AG04449 (cell line): ENCODE measurements at regions of chr20 and their contacts with region 1.

Region 1: DNA sequence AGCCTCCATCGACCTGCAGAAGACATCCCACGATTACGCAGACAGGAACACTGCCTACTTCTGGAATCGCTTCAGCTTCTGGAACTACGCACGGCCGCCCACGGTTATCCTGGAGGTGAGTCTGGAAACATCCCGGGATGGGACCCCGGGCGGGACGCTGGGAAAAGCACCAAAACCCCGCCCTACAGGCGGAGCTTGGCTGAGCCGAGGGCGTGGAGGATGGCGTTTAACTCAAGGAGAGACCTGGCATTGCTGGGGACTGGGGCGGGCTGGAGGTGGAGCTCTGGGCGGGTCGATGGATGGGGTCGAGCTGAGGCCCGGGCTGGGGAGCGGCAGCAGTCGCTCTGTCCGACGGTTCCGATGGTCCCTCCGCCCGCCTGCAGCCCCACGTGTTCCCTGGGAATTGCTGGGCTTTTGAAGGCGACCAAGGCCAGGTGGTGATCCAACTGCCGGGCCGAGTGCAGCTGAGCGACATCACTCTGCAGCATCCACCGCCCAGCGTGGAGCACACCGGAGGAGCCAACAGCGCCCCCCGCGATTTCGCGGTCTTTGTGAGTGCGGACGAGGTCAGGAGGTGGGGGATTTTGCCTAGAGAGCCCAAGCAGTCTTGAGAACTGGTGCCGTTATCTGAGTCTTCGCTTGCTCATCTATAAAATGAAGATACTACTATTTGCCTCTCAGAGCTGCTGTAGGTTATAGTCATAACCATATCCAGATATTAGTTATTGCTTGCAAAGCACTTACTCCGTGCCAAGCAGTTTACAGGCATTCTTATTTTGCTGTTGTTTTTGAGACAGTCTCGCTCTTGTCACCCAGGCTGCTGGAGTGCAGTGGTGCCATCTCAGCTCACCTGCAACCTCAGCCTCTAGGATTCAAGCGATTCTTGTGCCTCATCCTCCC is 3.8 kb downstream of the SPAG4 start:
- DNase-seq: peak; percentile 10
- H3K4me3 ChIP-seq: peak overlapping the region; percentile 70
- CTCF ChIP-seq: peak; percentile 62

Region 2: DNA sequence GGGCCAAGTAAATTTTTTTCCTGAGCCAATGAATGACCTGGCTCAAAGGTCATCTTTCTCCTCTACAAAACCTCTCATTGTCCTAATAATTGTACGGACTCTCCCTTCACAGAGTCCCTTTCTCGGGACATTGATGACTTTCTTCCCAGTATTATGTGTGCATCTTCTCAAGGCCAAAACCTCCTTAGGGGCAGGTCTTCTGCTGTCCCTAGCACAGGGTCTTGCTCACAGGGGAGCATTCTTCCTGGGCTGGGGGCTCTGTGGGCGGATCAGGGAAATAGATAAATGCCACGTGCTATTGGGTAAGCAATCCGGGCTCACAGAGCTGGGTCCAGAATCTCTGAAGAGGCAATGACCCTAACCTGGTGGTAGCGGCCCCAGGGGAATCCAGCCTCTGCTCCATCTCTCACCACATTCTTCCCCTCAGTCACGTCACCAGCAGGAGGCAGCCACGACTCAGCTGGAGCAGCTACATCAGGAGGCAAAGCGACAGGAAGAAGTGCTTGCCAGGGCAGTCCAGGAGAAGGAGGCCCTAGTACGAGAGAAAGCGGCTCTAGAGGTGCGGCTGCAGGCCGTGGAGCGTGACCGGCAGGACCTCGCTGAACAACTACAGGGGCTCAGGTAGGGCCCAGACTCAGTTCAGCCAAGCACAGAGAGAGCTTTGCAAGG is 140.5 kb before region 1 on chr20:
- CTCF ChIA-PET with region 1: no interaction called
- POLR2A ChIA-PET with region 1: no interaction called
- DNase-seq: no peak
- H3K4me3 ChIP-seq: no peak overlapping the region
- CTCF ChIP-seq: no peak

Region 3: GRCh38 chr20:35629427-35630145 is 10.1 kb after region 1 on chr20:
- CTCF ChIA-PET with region 1: interaction called, 18 read pairs
- POLR2A ChIA-PET with region 1: interaction called, 6 read pairs
- DNase-seq: no peak
- H3K4me3 ChIP-seq: no peak overlapping the region
- CTCF ChIP-seq: no peak

Region 4: DNA sequence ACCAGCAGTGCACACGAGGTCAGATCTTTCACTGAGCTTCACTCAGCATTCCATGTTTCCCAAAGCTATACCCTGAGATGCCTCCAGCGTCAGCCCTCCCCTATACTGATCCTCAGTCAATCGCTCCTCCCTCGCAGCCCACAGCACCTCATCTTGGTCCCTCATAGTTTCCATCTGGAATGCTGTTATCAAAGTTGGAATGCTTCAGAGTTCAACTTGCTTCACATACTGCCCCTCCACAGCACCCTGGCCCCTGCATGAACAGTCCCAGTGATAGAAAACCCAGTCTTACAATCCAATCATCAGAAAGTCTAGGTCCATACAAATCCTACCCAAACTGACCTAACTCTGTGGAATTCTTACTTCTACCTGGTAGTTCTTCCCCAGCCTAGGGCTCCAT is 16.2 kb after region 1 on chr20:
- CTCF ChIA-PET with region 1: interaction called, 18 read pairs
- POLR2A ChIA-PET with region 1: interaction called, 6 read pairs
- DNase-seq: no peak
- H3K4me3 ChIP-seq: no peak overlapping the region
- CTCF ChIP-seq: no peak